ENCODE measurements at regions of chr10 and their contacts with region 1.

Region 1: DNA sequence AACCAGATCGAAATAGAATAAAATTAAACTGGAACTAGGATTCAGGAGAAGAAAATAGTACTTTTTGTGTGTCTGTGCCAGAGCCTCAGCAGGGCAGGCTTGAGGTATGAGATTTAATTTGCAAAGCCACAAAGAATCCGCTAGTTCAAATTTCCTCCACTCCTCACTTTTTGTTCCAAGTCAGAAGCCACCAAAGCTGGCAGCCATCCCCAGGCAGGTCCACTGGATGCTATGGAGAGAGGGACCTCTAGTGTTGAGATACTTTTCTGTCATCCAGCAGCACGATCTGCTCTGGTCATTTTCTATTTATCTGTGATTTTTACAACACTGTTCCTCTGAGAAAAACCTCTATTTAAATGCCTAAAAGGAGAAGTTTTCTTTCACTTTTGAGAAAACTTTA is 147.9 kb upstream of the FRMD4A start:
- DNase-seq: peak; percentile 51
- H3K4me3 ChIP-seq: no peak overlapping the region
- H3K27ac ChIP-seq: no peak overlapping the region
- H3K4me1 ChIP-seq: no peaks in the 10 kb centered on the region
- H3K27me3 ChIP-seq: no peaks in the 10 kb centered on the region
- CTCF ChIP-seq: peak; percentile 29 to 64 (median 40)
- POLR2A ChIP-seq: no peak

Region 2: DNA sequence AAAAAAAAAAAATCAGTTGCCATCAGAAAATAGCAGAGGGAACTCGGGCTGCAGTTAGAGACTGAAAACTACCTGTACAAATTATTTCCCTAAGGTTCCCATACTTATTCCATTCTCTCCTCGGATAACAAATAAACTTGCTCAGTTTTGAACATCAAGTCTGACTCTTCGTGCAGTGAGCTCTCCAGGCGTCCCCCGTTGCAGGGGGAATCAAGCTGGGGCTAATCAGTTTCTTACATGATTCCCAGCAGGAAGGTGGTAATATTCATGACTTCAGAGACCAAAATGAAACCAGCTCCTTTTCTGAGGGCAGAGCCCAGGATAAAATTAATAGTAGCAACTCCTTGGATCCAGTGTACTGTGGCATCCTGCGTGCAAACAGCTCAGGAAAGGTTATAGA is 283.2 kb before region 1 on chr10:
- intact Hi-C with region 1: loop called (anchors 5 kb)
- DNase-seq: no peak
- H3K4me3 ChIP-seq: no peak overlapping the region
- H3K27ac ChIP-seq: no peak overlapping the region
- H3K4me1 ChIP-seq: no peaks in the 10 kb centered on the region
- H3K27me3 ChIP-seq: peaks cover 3% of the 10 kb centered on the region
- CTCF ChIP-seq: no peak
- POLR2A ChIP-seq: no peak

Region 3: GRCh38 chr10:14254368-14254767 is 224.2 kb before region 1 on chr10:
- intact Hi-C with region 1: no loop called
- DNase-seq: peak; percentile 80
- H3K4me3 ChIP-seq: no peak overlapping the region
- H3K27ac ChIP-seq: no peak overlapping the region
- H3K4me1 ChIP-seq: no peaks in the 10 kb centered on the region
- H3K27me3 ChIP-seq: no peaks in the 10 kb centered on the region
- CTCF ChIP-seq: no peak
- POLR2A ChIP-seq: no peak

Region 4: DNA sequence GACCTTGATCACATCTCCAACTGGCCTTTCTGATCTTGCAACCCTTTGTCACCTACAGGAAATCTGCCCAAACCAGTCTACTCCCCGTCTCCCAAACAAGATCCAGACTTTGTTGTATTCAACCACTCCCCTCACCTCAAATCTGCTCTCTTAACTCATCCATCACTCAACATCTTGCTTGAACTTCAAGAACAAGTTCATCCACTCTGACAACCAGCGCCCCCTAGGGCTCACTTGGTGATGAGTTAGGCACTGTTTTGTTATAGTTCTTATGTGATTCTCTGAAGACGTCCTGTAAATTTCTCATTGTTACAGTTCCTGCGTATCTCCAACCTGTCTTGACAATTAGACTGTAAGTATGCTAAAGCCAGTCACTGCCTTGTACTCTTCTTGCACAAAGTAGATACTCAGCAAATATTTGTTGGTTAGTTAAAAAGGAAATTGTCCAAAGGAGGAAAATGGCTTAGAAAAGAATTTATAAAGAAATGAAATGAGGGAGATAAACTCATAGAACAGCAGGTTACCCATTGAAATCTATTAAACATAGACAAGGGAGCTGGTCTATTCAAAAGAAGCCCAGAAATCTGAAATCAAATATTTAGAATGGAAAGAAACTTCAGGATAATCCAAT is 153.2 kb before region 1 on chr10:
- intact Hi-C with region 1: no loop called
- DNase-seq: peak; percentile 39
- H3K4me3 ChIP-seq: no peak overlapping the region
- H3K27ac ChIP-seq: no peak overlapping the region
- H3K4me1 ChIP-seq: no peaks in the 10 kb centered on the region
- H3K27me3 ChIP-seq: no peaks in the 10 kb centered on the region
- CTCF ChIP-seq: peak in 1 of 4 experiments; percentile 32
- POLR2A ChIP-seq: no peak

Measured in prostate gland (tissue), 2 donors.